Uterus (tissue), 4 donors: ENCODE measurements at regions of chr19 and their contacts with region 1.

Region 1: DNA sequence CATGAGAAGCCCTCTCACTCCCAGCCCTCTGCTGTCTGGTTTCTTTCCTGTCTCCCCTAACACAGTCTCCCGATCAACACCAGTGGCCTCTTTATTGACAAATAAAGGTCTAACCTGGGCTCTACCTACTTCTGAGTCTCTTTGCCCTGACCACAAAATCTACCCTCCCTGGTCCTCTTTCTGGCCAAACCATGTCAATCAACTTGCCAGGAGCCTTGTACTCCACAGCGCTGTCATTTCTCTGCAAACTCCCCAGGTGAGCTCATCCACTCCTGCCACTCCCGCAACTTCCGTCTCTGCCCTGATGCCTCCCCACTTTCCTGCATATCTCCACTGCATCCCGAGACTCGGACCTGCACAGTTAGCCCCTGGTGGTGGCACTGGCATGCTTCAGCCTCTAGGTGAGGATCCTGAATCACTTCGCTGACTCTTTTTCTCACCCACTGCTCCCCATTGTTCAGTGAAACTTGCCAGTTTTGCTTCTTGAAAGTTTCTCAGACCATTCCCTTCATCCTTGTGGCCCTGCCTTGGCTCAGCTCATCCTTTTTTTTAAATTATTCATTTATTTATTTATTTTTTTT is 3.3 kb upstream of the CTU1 start:
- DNase-seq: no peak
- H3K4me3 ChIP-seq: no peak overlapping the region
- H3K27ac ChIP-seq: no peak overlapping the region
- H3K4me1 ChIP-seq: peaks cover 7 to 8% of the 10 kb centered on the region in 2 donors
- H3K27me3 ChIP-seq: no peaks in the 10 kb centered on the region
- CTCF ChIP-seq: no peak
- POLR2A ChIP-seq: no peak

Region 2: GRCh38 chr19:51002542-51003171 is 108.9 kb before region 1 on chr19:
- intact Hi-C with region 1: no loop called
- DNase-seq: no peak
- H3K4me3 ChIP-seq: no peak overlapping the region
- H3K27ac ChIP-seq: no peak overlapping the region
- H3K4me1 ChIP-seq: no peaks in the 10 kb centered on the region
- H3K27me3 ChIP-seq: peaks cover 0 to 12% of the 10 kb centered on the region in 2 donors
- CTCF ChIP-seq: no peak
- POLR2A ChIP-seq: peak in 1 of 2 donors; percentile 19

Region 3: DNA sequence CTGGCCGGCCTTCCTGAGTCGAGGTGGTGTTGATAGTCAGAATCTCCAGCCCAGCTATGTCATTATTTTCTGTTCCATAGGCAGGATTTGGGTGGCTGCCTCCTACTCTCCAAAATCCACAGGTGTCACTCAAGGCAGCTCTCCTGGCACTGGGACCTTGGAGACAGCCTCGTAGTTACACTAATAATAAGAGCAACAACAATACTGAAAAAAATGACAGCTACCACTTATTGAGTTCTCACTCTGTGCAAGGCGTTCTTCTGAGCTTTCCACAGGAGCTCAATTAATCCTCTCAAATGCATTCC is 64.5 kb before region 1 on chr19:
- intact Hi-C with region 1: no loop called
- DNase-seq: no peak
- H3K4me3 ChIP-seq: no peak overlapping the region
- H3K27ac ChIP-seq: no peak overlapping the region
- H3K4me1 ChIP-seq: no peaks in the 10 kb centered on the region
- H3K27me3 ChIP-seq: no peaks in the 10 kb centered on the region
- CTCF ChIP-seq: no peak
- POLR2A ChIP-seq: no peak

Region 4: GRCh38 chr19:51059715-51060114 is 51.8 kb before region 1 on chr19:
- intact Hi-C with region 1: no loop called
- DNase-seq: no peak
- H3K4me3 ChIP-seq: no peak overlapping the region
- H3K27ac ChIP-seq: no peak overlapping the region
- H3K4me1 ChIP-seq: peaks cover 0 to under 1% of the 10 kb centered on the region in 2 donors
- H3K27me3 ChIP-seq: no peaks in the 10 kb centered on the region
- CTCF ChIP-seq: no peak
- POLR2A ChIP-seq: no peak

Region 5: GRCh38 chr19:51219307-51219706 is 107.8 kb after region 1 on chr19:
- intact Hi-C with region 1: no loop called
- DNase-seq: no peak
- H3K4me3 ChIP-seq: no peak overlapping the region
- H3K27ac ChIP-seq: no peak overlapping the region
- H3K4me1 ChIP-seq: no peaks in the 10 kb centered on the region
- H3K27me3 ChIP-seq: no peaks in the 10 kb centered on the region
- CTCF ChIP-seq: no peak
- POLR2A ChIP-seq: no peak

Region 6: DNA sequence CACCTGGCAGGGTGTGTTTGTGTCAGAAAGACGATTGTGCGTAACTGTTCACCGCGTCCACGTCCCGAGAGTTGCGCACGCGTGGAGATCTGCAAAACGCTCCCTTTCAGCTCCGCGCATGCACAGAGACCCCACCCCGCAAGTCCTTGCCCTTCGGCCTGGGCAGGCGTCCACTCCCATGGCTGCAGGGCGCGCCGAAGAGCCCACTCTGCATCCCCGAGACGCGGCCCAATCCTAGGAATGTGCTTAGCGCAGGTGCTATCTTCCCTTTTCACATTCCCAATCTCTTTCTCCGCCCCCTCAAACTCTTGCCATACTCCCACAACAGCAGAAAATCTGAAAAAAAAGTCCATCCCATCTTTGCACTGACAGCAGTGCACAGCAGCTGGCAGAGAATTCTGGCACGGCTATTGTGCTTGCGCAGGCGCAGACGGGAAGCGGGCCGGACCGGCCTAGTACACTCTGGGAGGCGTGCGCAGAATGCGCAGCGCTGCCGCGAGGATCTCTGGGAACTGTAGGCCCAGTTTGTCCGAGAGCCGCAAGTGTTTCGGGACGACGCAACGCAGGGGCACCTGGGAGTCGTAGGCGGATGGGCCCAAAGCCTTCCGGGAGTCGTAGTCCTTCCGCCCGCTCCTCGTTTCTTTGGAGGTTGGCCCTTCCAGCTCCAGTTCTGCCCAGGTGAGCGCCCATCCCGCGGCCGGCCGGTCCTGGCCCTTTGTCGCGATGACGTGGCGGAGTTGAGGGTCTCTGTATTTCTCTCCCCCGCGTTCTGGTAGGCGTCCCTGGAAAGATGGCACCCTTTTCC is 482.7 kb after region 1 on chr19:
- intact Hi-C with region 1: loop called (anchors 10 kb)
- DNase-seq: peak; percentile 98 to 99
- H3K4me3 ChIP-seq: peak overlapping the region; percentile 51 to 60
- H3K27ac ChIP-seq: peak overlapping the region; percentile 45 to 59
- H3K4me1 ChIP-seq: peaks cover 0 to 8% of the 10 kb centered on the region in 2 donors
- H3K27me3 ChIP-seq: no peaks in the 10 kb centered on the region
- CTCF ChIP-seq: peak in 1 of 4 experiments; percentile 31
- POLR2A ChIP-seq: no peak